GM12878 (cell line): ENCODE measurements at regions of chr1 and their contacts with region 1.

Region 1: DNA sequence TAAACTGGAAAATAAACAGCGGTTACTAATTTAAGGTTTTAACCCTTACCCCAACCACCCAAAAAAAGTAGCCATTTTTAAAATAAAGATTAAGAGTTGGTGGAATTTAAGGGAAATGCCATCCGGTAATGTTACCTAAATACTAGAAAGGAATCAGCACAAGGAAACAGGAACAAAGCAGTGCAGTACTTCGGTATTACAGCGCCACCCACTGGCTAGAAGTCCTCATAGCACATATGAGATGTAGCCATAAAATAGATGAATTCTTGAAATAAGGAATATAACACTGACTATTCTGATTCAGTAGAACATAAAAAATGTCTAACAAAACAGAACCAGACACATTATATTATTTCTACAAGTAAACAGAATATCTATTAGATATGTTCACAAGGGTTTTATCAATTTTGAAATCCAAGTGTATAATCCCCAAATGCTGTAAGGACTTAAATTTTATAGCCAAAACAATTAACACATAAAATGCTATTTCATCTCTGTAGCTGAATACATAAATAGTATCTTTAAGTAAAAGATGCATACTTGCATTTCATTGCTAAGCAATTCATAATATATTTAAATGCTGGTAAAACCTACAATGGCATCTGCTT is 58.8 kb downstream of the FRRS1 start:
- DNase-seq: peak; percentile 11
- ATAC-seq: peak; percentile 86
- H3K4me3 ChIP-seq: no peak overlapping the region
- H3K27ac ChIP-seq: no peak overlapping the region
- H3K4me1 ChIP-seq: no peaks in the 10 kb centered on the region
- H3K27me3 ChIP-seq: no peaks in the 10 kb centered on the region
- CTCF ChIP-seq: peak; percentile 83 to 88 (median 84)
- EP300 ChIP-seq: no peak
- POLR2A ChIP-seq: no peak
- RAD21 ChIP-seq: peak; percentile 81

Region 2: GRCh38 chr1:98991127-98992012 is 716.3 kb before region 1 on chr1:
- CTCF ChIA-PET with region 1: no interaction called
- POLR2A ChIA-PET with region 1: no interaction called
- RAD21 ChIA-PET with region 1: no interaction called
- SMC1A ChIA-PET with region 1: no interaction called
- in situ Hi-C with region 1: no loop called
- intact Hi-C with region 1: loop called (anchors 10 kb)
- DNase-seq: peak; percentile 1
- ATAC-seq: peak; percentile 85
- H3K4me3 ChIP-seq: no peak overlapping the region
- H3K27ac ChIP-seq: no peak overlapping the region
- H3K4me1 ChIP-seq: no peaks in the 10 kb centered on the region
- H3K27me3 ChIP-seq: no peaks in the 10 kb centered on the region
- CTCF ChIP-seq: peak; percentile 25 to 34 (median 29); a peak in 5 of 6 replicates
- EP300 ChIP-seq: no peak
- POLR2A ChIP-seq: no peak
- RAD21 ChIP-seq: peak; percentile 32

Region 3: DNA sequence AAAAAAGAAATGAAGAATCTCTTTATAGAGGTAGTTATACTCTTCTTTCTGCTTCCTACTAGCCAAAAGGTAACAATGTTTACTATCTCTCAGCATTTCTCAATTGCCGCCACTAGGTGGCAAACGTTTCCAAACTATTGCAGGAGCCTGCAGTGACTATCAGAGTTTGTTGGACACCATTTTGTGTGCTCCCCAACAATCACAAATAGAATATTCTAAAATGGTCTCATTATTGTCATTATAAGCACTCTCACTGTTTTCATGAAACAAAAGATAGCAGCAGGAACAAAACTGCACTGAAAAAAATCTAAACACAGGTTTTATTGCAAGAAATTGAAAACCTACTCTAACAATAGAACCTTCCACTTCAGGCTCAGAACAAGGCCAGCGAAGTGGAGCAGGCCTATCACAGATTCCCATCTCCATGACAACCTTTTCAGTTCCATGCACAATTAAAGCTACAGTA is 527.3 kb before region 1 on chr1:
- CTCF ChIA-PET with region 1: interaction called, 4 read pairs
- POLR2A ChIA-PET with region 1: no interaction called
- RAD21 ChIA-PET with region 1: interaction called, 3 read pairs
- SMC1A ChIA-PET with region 1: interaction called, 3 read pairs
- in situ Hi-C with region 1: loop called (anchors 10 kb)
- intact Hi-C with region 1: loop called (anchors 1 kb)
- DNase-seq: peak; percentile 25
- ATAC-seq: peak; percentile 98
- H3K4me3 ChIP-seq: no peak overlapping the region
- H3K27ac ChIP-seq: no peak overlapping the region
- H3K4me1 ChIP-seq: no peaks in the 10 kb centered on the region
- H3K27me3 ChIP-seq: no peaks in the 10 kb centered on the region
- CTCF ChIP-seq: peak; percentile 69 to 87 (median 73)
- EP300 ChIP-seq: no peak
- POLR2A ChIP-seq: no peak
- RAD21 ChIP-seq: peak; percentile 92

Region 4: GRCh38 chr1:99481391-99481996 is 226.1 kb before region 1 on chr1:
- CTCF ChIA-PET with region 1: no interaction called
- POLR2A ChIA-PET with region 1: no interaction called
- RAD21 ChIA-PET with region 1: interaction called, 4 read pairs
- SMC1A ChIA-PET with region 1: interaction called, 3 read pairs
- in situ Hi-C with region 1: no loop called
- intact Hi-C with region 1: loop called (anchors 5 kb)
- DNase-seq: no peak
- ATAC-seq: peak; percentile 82
- H3K4me3 ChIP-seq: no peak overlapping the region
- H3K27ac ChIP-seq: no peak overlapping the region
- H3K4me1 ChIP-seq: no peaks in the 10 kb centered on the region
- H3K27me3 ChIP-seq: peaks cover 0 to 2% of the 10 kb centered on the region in 2 experiments; a peak in 1 of 4 replicates
- CTCF ChIP-seq: peak; percentile 62 to 71 (median 63)
- EP300 ChIP-seq: no peak
- POLR2A ChIP-seq: no peak
- RAD21 ChIP-seq: peak; percentile 87

Region 5: GRCh38 chr1:100028765-100029164 is 321.1 kb after region 1 on chr1:
- CTCF ChIA-PET with region 1: no interaction called
- POLR2A ChIA-PET with region 1: no interaction called
- RAD21 ChIA-PET with region 1: no interaction called
- SMC1A ChIA-PET with region 1: no interaction called
- in situ Hi-C with region 1: no loop called
- intact Hi-C with region 1: no loop called
- DNase-seq: no peak
- ATAC-seq: peak; percentile 55
- H3K4me3 ChIP-seq: no peak overlapping the region
- H3K27ac ChIP-seq: no peak overlapping the region
- H3K4me1 ChIP-seq: no peaks in the 10 kb centered on the region; the same call in 1 of the 2 replicates
- H3K27me3 ChIP-seq: no peaks in the 10 kb centered on the region
- CTCF ChIP-seq: no peak
- EP300 ChIP-seq: no peak
- POLR2A ChIP-seq: no peak
- RAD21 ChIP-seq: no peak